ENCODE measurements at regions of chr14 and their contacts with region 1.

Region 1: DNA sequence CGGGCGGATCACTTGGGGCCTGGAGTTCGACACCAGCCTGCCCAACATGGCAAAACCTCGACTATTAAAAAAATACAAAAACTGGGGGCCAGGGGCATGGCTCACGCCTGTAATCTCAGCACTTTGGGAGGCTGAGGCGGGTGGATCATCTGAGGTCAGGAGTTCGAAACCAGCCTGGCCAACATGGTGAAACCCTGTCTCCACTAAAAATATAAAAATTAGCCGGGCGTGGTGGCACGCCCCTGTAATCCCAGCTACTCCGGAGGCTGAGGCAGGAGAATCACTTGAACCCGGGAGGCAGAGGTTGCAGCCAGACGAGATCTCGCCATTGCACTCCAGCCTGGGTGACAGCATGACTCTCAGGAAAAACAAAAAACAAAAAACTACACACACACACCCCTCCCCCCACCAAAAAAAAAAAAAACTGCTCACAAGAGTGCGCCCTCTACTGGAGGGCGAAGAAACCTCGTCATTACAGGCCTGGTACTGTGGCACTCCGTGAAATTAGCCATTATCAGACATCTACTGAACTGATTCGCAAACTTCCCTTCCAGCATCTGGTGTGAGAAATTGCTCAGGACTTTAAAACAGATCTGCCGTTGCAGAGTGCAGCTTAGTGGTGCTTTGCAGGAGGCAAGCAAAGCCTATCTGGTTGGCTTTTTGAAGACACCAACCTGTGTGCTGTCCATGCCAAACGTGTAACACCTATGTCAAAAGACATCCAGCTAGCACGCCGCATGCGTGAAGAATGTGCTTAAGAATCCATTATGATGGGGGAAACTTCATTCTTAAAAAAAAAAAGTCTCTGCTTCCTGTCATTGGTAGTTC is 7.7 kb downstream of the PPP1R3E start:
- DNase-seq: peak; percentile 84
- H3K4me3 ChIP-seq: no peak overlapping the region
- H3K27ac ChIP-seq: no peak overlapping the region
- H3K4me1 ChIP-seq: peaks cover 19% of the 10 kb centered on the region
- CTCF ChIP-seq: peak; percentile 92

Region 2: DNA sequence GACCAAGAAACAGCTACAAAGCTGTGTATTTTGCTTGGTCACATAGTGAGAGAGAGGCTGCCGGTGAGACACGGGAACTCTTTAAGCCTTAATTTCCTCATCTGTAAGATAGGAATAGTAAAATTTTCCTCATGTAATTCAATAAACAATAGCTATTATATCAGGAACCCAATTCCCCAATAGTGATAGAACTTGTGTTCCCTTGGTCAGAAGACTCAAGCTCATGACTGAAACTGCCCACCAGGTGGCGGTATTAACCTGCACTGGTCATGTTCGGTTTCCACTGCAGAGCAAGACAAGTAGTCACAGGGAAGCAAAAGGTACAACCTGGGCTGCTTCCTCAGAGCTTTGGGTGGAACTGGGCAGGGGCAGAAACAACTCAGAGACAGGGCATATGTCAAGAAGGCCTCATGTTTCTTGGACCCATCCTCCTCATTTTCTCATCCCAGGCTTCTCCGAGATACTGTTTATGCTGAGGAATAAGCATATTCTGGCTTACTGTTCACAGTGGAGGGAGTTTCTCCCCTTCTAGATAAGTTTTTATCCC is 308.4 kb before region 1 on chr14:
- CTCF ChIA-PET with region 1: no interaction called
- POLR2A ChIA-PET with region 1: no interaction called
- intact Hi-C with region 1: no loop called
- DNase-seq: peak; percentile 89
- H3K4me3 ChIP-seq: no peak overlapping the region
- H3K27ac ChIP-seq: no peak overlapping the region
- H3K4me1 ChIP-seq: no peaks in the 10 kb centered on the region
- CTCF ChIP-seq: peak; percentile 99

Region 3: DNA sequence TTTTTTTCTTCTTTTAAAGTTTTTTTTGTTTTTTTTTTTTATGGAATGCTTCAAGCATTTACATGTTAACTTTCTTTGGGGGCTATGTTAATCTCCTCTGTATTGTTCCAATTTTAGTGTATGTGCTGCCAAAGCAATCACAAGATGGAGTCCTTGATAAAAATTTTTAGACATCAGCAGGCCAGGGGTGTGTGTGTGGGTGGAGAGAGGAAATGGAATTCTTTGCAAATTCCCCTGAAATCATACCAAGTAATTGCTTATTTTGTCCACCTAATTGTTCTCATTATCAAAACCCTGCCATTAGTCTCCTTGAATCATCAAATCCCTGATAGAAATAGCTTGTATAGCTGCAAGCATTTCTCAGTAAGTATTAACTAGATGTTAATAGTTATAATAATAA is 35.5 kb before region 1 on chr14:
- CTCF ChIA-PET with region 1: no interaction called
- POLR2A ChIA-PET with region 1: no interaction called
- intact Hi-C with region 1: loop called (anchors 2 kb)
- DNase-seq: no peak
- H3K4me3 ChIP-seq: no peak overlapping the region
- H3K27ac ChIP-seq: no peak overlapping the region
- H3K4me1 ChIP-seq: no peaks in the 10 kb centered on the region
- CTCF ChIP-seq: no peak